Esophagus muscularis mucosa (tissue), 4 donors: ENCODE measurements at regions of chr3 and their contacts with region 1.

Region 1: GRCh38 chr3:107676469-107677309 is 153.9 kb downstream of the BBX start:
- DNase-seq: no peak
- H3K4me3 ChIP-seq: no peak overlapping the region
- H3K27ac ChIP-seq: no peak overlapping the region
- H3K4me1 ChIP-seq: peaks cover 26 to 80% (median 69%) of the 10 kb centered on the region in 4 donors
- H3K27me3 ChIP-seq: no peaks in the 10 kb centered on the region
- CTCF ChIP-seq: peak; percentile 55 to 62 (median 60)
- EP300 ChIP-seq: no peak
- POLR2A ChIP-seq: no peak

Region 2: DNA sequence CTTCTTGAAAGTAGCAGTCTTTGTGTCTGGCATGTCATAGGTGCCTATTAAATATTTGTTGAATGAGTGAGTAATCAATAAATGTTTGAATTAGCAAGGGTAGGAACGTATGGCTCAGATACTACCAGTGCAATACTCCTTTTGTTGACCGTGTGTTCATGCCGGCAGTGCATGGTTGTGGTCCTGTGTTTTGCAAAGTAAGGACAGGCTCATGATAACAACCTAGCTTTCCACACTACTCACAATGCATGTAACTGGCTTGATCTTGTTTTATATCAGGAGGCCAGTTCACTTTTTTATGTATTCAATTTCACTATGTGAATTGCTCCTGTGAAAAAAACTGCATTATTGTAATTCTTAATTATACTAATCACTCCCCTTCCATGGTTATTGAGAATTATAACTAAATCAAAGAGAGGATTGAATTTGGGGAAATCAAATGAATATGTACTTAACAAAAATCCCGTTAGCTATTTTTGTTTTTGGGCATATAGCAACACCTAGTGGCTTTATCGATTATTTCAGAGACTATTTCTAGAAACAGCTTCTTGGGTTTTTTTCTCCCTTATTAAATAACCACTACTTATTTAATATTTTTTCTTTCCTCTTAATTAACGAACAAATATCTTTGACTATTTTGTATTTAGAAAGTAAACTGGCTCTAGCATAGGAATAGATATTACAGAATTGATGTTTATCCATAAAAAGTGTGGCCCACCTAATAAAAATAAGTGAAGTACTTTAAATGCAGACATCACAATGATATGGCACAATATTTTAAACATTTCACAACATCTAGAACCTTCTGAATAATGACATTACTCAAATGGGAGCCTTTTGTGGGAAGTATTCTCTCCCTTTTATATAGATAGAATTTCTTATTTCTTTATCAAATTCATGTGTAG is 64.6 kb after region 1 on chr3:
- intact Hi-C with region 1: loop called (anchors 5 kb)
- DNase-seq: no peak
- H3K4me3 ChIP-seq: no peak overlapping the region
- H3K27ac ChIP-seq: no peak overlapping the region
- H3K4me1 ChIP-seq: no peaks in the 10 kb centered on the region
- H3K27me3 ChIP-seq: no peaks in the 10 kb centered on the region
- CTCF ChIP-seq: peak; percentile 56 to 58 (median 58)
- EP300 ChIP-seq: no peak
- POLR2A ChIP-seq: no peak

Region 3: DNA sequence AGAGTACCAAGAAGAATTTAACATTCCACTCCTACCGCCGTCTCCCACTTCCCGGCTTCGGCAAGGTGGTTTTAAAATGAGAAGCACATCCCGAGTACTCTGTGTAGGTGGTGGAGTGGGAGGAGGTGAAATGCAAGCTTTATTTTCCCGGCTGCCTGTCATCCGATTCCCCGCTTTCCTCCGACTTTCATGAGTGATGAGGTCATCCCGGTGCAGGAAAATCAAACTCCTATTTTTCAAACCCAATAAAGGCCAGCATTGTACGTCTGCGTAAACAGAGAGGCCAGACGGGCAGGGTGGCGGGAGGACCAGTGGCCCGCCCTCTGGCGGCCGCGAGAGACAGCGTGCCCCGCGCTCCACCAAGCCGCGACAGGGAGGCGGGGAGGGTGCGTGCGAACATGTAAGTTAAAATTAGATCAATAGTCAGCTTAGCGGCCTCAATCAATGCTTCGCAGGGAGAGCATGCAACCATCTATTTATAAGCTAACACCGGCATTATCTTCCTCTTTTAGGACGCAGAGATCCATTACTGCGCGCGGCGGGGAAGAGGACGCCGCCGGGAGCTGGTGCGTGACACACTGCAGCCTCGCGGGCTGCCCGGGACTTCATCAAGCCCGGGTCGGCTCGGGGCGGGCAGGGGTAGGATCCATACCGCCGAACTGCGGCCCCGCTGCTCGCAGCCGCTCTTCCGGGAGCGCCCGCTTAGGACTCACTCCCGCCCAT is 250.8 kb after region 1 on chr3:
- intact Hi-C with region 1: loop called (anchors 10 kb)
- DNase-seq: no peak
- H3K4me3 ChIP-seq: peak overlapping the region; percentile 59 to 64 (median 61)
- H3K27ac ChIP-seq: peak overlapping the region in 3 of 4 donors; percentile 21 to 53 (median 31)
- H3K4me1 ChIP-seq: peaks cover 5 to 23% (median 19%) of the 10 kb centered on the region in 4 donors
- H3K27me3 ChIP-seq: no peaks in the 10 kb centered on the region
- CTCF ChIP-seq: peak; percentile 76 to 96 (median 93)
- EP300 ChIP-seq: no peak
- POLR2A ChIP-seq: no peak